HEK293 (cell line): ENCODE measurements at regions of chr12 and their contacts with region 1.

Region 1: GRCh38 chr12:52192173-52192791 is 468 bp upstream of the KRT80 start:
- H3K4me3 ChIP-seq: no peak overlapping the region; the same call in 1 of the 2 replicates
- H3K27ac ChIP-seq: no peak overlapping the region
- H3K4me1 ChIP-seq: peaks cover 2% of the 10 kb centered on the region; the same call in 1 of the 2 replicates
- CTCF ChIP-seq: no peak

Region 2: GRCh38 chr12:52171950-52172512 is 20.3 kb before region 1 on chr12:
- CTCF ChIA-PET with region 1: interaction called, 38 read pairs
- POLR2A ChIA-PET with region 1: interaction called, 4 read pairs
- H3K4me3 ChIP-seq: no peak overlapping the region
- H3K27ac ChIP-seq: no peak overlapping the region
- H3K4me1 ChIP-seq: no peaks in the 10 kb centered on the region
- CTCF ChIP-seq: peak; percentile 45

Region 3: GRCh38 chr12:52181746-52182145 is 10.5 kb before region 1 on chr12:
- CTCF ChIA-PET with region 1: interaction called, 5 read pairs
- POLR2A ChIA-PET with region 1: interaction called, 19 read pairs
- H3K4me3 ChIP-seq: no peak overlapping the region
- H3K27ac ChIP-seq: no peak overlapping the region
- H3K4me1 ChIP-seq: peaks cover 5% of the 10 kb centered on the region; the same call in 1 of the 2 replicates
- CTCF ChIP-seq: no peak